Activated CD4-positive, alpha-beta T cell treated with anti-CD3 and anti-CD28 coated beads for 36 hours (primary cell): ENCODE measurements at regions of chr15 and their contacts with region 1.

Region 1: GRCh38 chr15:99928429-99928981 is 195.3 kb upstream of the LYSMD4 start:
- DNase-seq: peak; percentile 91
- ATAC-seq: peak; percentile 93
- H3K4me3 Mint-ChIP-seq: peak overlapping the region; percentile 80
- H3K27ac Mint-ChIP-seq: peak overlapping the region; percentile 81
- H3K4me1 Mint-ChIP-seq: peaks cover 17% of the 10 kb centered on the region
- H3K27me3 Mint-ChIP-seq: no peaks in the 10 kb centered on the region

Region 2: DNA sequence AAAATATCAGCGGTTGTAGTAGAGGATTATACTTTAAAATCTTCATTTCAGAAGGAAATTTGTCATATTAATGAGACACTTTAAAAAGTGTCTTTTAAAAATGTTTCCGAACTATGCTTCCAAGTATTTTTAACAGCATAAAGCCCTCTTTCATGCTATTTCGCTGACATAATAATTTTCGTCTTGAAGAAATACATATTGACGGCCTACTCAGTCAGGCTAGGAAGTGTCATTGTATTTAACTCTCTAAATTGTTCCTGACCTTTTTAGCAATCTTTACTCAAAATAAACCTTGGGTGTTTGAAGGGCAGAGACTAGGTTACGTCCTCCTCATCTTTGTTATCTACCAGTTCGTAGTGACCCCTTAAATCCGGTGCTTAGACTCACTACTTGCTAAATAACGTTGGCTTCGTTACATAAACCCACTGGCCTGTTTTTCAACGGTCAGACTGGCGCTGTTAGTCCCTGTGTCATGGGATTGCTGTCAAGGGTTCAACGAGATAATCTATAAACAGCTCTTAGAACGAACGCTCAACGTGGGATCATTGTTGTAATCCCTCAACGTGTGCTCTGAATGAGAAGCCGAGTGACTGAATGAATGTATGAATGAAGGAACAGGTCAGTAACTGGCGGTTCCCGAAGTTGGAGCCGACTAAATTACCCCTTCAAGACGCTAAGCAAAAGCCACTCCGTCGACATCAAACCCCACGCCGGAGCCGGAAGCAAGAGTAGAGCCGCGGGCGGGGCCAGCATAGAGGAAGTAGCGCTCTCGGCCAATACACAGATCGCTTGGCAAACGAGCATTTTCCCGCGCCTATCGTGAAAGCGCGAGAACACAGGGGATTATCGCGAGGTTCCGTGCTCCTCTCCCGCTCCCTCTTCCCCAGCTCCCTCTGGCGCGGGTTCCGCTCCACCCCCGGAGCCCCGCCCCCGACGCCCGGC is 677.7 kb before region 1 on chr15:
- CTCF ChIA-PET with region 1: no interaction called
- POLR2A ChIA-PET with region 1: no interaction called
- intact Hi-C with region 1: loop called in 1 of 2 experiments (anchors 2 kb)
- DNase-seq: peak; percentile 98
- ATAC-seq: peak; percentile 99
- H3K4me3 Mint-ChIP-seq: no peak overlapping the region
- H3K27ac Mint-ChIP-seq: peak overlapping the region; percentile 95
- H3K4me1 Mint-ChIP-seq: peaks cover 22% of the 10 kb centered on the region
- H3K27me3 Mint-ChIP-seq: no peaks in the 10 kb centered on the region

Region 3: DNA sequence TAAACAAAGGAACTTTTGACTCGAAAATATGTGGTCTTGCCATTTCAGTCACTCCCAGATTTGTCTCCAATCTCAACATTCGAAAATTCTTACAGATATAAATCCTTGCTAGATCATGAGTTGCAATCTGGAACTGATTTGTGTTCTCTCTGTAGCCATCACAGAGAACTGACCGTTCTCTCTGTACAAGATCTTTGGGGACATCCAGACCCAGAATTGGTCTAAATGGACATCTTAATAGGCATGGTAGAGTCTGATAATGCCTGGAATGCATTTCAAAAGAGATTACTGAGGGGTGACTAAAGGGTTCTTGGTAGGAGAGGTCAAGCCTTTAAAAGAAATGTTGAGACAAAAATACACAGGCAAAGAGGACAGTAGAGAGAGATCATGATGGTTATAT is 369.9 kb before region 1 on chr15:
- CTCF ChIA-PET with region 1: no interaction called
- POLR2A ChIA-PET with region 1: no interaction called
- intact Hi-C with region 1: no loop called
- DNase-seq: no peak
- ATAC-seq: no peak
- H3K4me3 Mint-ChIP-seq: no peak overlapping the region
- H3K27ac Mint-ChIP-seq: no peak overlapping the region
- H3K4me1 Mint-ChIP-seq: peaks cover under 1% of the 10 kb centered on the region
- H3K27me3 Mint-ChIP-seq: no peaks in the 10 kb centered on the region

Region 4: GRCh38 chr15:99733268-99734039 is 195.1 kb before region 1 on chr15 and contains the start of gene LYSMD4:
- CTCF ChIA-PET with region 1: no interaction called
- POLR2A ChIA-PET with region 1: interaction called, 4 read pairs
- intact Hi-C with region 1: loop called in 1 of 2 experiments (anchors 2 kb)
- DNase-seq: peak; percentile 100
- ATAC-seq: peak; percentile 99
- H3K4me3 Mint-ChIP-seq: peak within 1 kb of the TSS; percentile 71
- H3K27ac Mint-ChIP-seq: peak within 1 kb of the TSS; percentile 91
- H3K4me1 Mint-ChIP-seq: peaks cover 23% of the 10 kb centered on the region
- H3K27me3 Mint-ChIP-seq: no peaks in the 10 kb centered on the region
- total RNA-seq, gene LYSMD4: 4.7 to 5.3 TPM

Region 5: GRCh38 chr15:99764522-99764921 is 164.0 kb before region 1 on chr15:
- CTCF ChIA-PET with region 1: no interaction called
- POLR2A ChIA-PET with region 1: no interaction called
- intact Hi-C with region 1: no loop called
- DNase-seq: no peak
- ATAC-seq: no peak
- H3K4me3 Mint-ChIP-seq: no peak overlapping the region
- H3K27ac Mint-ChIP-seq: no peak overlapping the region
- H3K4me1 Mint-ChIP-seq: no peaks in the 10 kb centered on the region
- H3K27me3 Mint-ChIP-seq: peaks cover 4% of the 10 kb centered on the region

Region 6: DNA sequence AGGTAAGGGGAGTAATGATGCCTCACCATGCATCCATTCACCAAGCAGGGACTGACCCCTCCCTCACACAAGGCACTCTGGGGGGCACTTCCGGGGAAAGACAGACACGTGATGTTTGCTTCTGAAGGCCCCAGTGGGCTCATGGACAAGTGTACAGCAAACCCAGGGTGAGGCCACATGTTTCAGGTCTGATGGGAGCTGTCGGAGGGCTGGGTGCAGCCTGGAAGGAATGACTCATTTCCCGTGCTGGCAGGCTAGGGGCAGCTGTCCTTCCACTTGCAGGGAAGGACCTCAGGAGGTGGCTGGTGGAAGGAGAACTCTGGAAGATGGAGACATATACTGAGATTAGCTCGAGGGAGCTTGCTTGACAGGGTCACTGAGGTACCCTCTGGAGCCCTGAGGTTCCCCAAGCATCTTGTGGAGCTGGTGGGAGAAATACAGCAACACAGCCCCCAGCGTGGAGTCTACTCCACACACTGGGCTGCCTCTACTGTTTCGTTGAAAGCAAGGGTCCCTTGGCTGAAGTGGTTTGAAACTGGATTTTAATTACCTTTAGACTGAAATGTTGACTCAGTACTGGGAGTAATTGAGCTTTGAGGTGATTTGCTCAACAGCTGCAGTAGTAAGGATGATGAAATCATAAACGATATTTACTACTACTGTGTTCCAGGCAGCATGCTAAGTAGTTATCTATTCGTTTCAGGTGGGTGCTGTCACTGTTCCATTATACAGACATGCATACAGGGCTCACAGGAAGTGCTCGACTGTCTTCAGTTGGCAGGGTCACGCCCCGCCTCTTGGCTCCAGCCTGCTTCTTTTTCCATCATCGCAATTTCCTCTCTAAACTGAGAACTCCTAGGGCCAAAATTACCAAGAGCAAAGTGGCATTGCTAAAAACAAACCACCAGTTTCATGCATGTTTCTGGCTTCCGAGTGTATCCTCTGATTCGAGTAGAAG is 182.9 kb after region 1 on chr15:
- CTCF ChIA-PET with region 1: no interaction called
- POLR2A ChIA-PET with region 1: no interaction called
- intact Hi-C with region 1: loop called in 1 of 2 experiments (anchors 2 kb)
- DNase-seq: peak; percentile 74
- ATAC-seq: peak; percentile 94
- H3K4me3 Mint-ChIP-seq: peak overlapping the region; percentile 23
- H3K27ac Mint-ChIP-seq: peak overlapping the region; percentile 99
- H3K4me1 Mint-ChIP-seq: peaks cover 46% of the 10 kb centered on the region
- H3K27me3 Mint-ChIP-seq: no peaks in the 10 kb centered on the region

Region 7: DNA sequence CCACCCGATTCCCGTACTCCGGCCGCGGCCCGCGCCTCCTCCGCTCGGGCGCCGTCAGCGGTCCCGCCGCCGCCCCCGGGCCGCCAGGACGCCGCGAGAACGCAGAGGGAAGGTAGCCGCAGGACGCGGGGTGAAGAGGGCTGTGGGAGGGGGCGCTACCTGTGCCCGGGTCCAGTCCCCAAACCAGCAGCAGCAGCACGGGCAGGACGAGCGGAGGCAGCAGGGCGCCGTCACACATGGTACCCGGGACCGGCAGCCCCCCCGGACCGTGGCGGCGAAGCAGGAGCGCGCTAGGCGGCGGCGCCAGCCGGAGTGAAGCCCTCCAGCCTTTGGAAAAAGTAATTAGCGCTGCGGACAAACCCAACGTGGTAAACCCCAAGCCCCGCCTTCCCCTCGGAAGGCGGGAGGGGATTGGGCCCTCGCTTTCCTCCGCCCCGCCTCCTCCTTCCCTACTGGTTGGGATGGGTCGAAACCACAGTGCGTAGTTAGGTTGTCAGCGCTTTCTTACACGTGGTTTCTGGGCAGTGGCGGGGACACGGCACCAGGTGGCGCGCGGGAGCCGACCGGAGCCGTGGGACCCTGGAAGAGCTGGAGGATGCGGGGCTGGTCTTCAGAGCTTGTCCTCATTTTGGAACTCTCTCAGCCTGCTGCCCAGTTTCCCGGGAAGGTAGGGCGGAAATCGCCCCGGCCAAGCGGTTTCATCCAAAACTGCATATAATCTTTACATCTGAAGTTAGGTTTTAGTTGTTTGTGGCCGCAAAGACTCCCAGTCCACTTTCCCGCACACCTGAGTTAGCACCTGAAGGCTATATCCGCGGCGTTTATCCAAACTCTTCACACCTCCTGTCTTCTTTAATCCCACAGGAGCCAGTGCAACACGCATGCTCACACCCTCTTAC is 413.4 kb after region 1 on chr15 and contains the start of gene ADAMTS17:
- CTCF ChIA-PET with region 1: interaction called, 18 read pairs
- POLR2A ChIA-PET with region 1: no interaction called
- intact Hi-C with region 1: loop called (anchors 2 kb)
- DNase-seq: peak; percentile 96
- ATAC-seq: peak; percentile 99
- H3K4me3 Mint-ChIP-seq: peak within 1 kb of the TSS; percentile 54
- H3K27ac Mint-ChIP-seq: no peak within 1 kb of the TSS
- H3K4me1 Mint-ChIP-seq: peaks cover 12% of the 10 kb centered on the region
- H3K27me3 Mint-ChIP-seq: peaks cover 2% of the 10 kb centered on the region
- total RNA-seq, gene ADAMTS17: 0.49 to 0.57 TPM

Region 8: GRCh38 chr15:100602064-100602822 is 673.7 kb after region 1 on chr15 and contains the starts of genes ASB7 and LINS1:
- CTCF ChIA-PET with region 1: interaction called, 3 read pairs
- POLR2A ChIA-PET with region 1: no interaction called
- intact Hi-C with region 1: loop called (anchors 2 to 10 kb)
- DNase-seq: peak; percentile 100
- ATAC-seq: peak; percentile 85
- H3K4me3 Mint-ChIP-seq: no peak within 1 kb of the TSS
- H3K27ac Mint-ChIP-seq: no peak within 1 kb of the TSS
- H3K4me1 Mint-ChIP-seq: peaks cover 58% of the 10 kb centered on the region
- H3K27me3 Mint-ChIP-seq: no peaks in the 10 kb centered on the region
- total RNA-seq, gene ASB7: 16.6 to 19.5 TPM
- total RNA-seq, gene LINS1: 41.7 to 43.8 TPM

Region 9: DNA sequence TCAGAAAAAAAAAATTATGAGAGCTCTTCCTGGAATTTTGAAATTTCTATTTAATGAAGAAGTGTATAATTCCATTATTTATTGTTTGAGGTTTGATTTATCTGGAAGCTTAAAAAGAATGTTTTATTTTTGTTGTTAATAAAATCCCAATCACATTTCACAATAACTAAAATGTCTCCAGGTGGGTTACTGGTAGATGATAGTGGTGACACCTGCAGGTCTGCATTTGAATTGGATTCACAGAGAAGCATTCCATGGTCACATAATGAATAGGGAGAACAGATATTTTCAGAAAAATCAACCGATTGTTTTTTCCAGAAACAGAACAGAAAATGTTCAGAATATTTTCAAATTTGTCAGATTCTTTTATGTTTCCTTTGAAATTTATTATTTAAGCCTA is 722.2 kb after region 1 on chr15:
- CTCF ChIA-PET with region 1: no interaction called
- POLR2A ChIA-PET with region 1: no interaction called
- intact Hi-C with region 1: no loop called
- DNase-seq: no peak
- ATAC-seq: no peak
- H3K4me3 Mint-ChIP-seq: no peak overlapping the region
- H3K27ac Mint-ChIP-seq: no peak overlapping the region
- H3K4me1 Mint-ChIP-seq: no peaks in the 10 kb centered on the region
- H3K27me3 Mint-ChIP-seq: no peaks in the 10 kb centered on the region

Region 10: DNA sequence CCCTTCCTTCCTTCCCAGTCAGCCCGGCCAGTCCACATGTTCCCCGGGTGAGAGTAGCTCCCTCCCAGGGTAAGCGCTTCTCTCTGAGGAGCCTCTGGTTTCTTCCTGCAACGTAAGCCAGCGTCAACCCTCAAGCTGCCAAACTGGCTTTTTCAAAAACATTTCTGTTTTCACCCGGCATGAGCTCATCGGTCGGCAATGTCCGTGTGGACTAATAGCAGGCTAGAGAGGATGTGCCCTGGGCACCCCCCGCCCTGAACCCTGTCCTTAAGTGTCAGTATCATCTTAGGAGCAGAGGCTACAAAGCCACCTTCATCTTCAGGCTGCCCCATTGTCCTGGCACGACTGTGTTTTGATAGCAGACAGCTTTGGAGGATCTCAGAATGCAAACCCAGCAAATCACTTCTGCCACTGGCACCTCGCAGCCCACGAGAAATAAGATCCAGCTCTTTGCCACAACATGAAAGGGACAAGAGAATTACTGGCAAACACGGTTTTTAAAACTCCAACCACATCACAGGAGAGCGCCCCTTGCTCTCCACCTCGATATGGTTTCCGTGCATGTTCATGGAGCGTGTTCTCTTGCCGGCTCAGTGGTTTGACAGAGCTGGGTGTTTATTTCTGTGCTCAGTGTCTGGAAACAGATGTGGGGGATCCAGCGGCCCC is 961.0 kb after region 1 on chr15:
- CTCF ChIA-PET with region 1: no interaction called
- POLR2A ChIA-PET with region 1: no interaction called
- intact Hi-C with region 1: no loop called
- DNase-seq: no peak
- ATAC-seq: no peak
- H3K4me3 Mint-ChIP-seq: no peak overlapping the region
- H3K27ac Mint-ChIP-seq: no peak overlapping the region
- H3K4me1 Mint-ChIP-seq: peaks cover 2% of the 10 kb centered on the region
- H3K27me3 Mint-ChIP-seq: peaks cover 40% of the 10 kb centered on the region

Region 11: GRCh38 chr15:101008158-101009139 is 1079.9 kb after region 1 on chr15:
- CTCF ChIA-PET with region 1: no interaction called
- POLR2A ChIA-PET with region 1: no interaction called
- intact Hi-C with region 1: loop called in 1 of 2 experiments (anchors 5 kb)
- DNase-seq: peak; percentile 92
- ATAC-seq: peak; percentile 92
- H3K4me3 Mint-ChIP-seq: peak overlapping the region; percentile 82
- H3K27ac Mint-ChIP-seq: peak overlapping the region; percentile 75
- H3K4me1 Mint-ChIP-seq: peaks cover 19% of the 10 kb centered on the region
- H3K27me3 Mint-ChIP-seq: peaks cover 3% of the 10 kb centered on the region